Kidney (tissue), 22 donors: ENCODE measurements at regions of chr4 and their contacts with region 1.

Region 1: GRCh38 chr4:113869743-113870375 is 108.3 kb upstream of the CAMK2D start:
- DNase-seq: no peak
- H3K4me3 ChIP-seq: no peak overlapping the region
- H3K27ac ChIP-seq: no peak overlapping the region
- H3K4me1 ChIP-seq: no peaks in the 10 kb centered on the region
- H3K27me3 ChIP-seq: no peaks in the 10 kb centered on the region
- CTCF ChIP-seq: no peak

Region 2: DNA sequence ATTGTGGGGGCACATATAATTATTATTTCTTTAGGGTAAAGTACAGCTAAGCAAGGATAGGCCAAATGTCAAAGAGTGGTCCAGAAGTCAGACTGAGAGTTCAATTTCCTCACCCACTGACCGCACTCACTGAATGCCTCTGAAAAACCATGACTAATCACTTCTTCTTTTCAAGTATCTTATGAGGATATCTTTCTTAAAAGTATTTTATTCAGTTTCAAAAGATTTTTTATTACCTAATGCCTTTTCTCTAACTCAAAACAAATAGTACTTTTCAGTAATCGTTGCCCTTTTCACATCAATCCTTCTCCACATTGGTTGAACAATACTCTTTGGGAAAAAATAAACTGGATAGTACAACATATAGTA is 46.6 kb before region 1 on chr4:
- intact Hi-C with region 1: loop called (anchors 10 kb)
- DNase-seq: no peak
- H3K4me3 ChIP-seq: no peak overlapping the region
- H3K27ac ChIP-seq: no peak overlapping the region
- H3K4me1 ChIP-seq: no peaks in the 10 kb centered on the region
- H3K27me3 ChIP-seq: no peaks in the 10 kb centered on the region
- CTCF ChIP-seq: no peak